Psoas muscle (tissue), 8 donors: ENCODE measurements at regions of chr15 and their contacts with region 1.

Region 1: DNA sequence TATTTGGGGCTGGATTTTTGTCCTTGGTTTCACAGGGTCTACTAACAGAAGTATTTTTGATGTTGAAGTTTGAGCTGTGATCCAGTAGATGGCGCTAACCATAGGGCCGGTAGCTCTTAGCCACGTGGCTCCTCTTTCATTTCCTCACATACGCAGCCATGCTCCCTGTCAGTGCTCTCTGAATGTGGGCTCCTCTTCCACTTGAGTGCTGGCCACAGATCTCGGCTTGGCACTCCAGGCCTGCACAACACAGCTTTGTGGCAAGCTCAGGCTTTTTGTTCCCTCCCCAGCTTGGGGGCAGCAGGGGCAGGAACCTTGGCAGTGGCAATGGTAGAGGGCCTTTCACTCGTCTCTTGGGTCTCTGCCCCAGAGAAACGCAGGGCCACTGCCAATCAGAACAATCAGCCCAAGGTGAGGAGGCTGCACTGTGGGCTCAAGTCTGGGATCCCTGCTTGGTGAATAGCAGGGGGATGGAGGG is 18.6 kb upstream of the DNAAF4 start:
- DNase-seq: no peak
- ATAC-seq: peak; percentile 64 to 86 (median 80)
- H3K4me3 ChIP-seq: no peak overlapping the region
- H3K27ac ChIP-seq: no peak overlapping the region
- H3K4me1 ChIP-seq: peaks cover 9% of the 10 kb centered on the region
- H3K27me3 ChIP-seq: no peaks in the 10 kb centered on the region
- CTCF ChIP-seq: peak; percentile 56

Region 2: DNA sequence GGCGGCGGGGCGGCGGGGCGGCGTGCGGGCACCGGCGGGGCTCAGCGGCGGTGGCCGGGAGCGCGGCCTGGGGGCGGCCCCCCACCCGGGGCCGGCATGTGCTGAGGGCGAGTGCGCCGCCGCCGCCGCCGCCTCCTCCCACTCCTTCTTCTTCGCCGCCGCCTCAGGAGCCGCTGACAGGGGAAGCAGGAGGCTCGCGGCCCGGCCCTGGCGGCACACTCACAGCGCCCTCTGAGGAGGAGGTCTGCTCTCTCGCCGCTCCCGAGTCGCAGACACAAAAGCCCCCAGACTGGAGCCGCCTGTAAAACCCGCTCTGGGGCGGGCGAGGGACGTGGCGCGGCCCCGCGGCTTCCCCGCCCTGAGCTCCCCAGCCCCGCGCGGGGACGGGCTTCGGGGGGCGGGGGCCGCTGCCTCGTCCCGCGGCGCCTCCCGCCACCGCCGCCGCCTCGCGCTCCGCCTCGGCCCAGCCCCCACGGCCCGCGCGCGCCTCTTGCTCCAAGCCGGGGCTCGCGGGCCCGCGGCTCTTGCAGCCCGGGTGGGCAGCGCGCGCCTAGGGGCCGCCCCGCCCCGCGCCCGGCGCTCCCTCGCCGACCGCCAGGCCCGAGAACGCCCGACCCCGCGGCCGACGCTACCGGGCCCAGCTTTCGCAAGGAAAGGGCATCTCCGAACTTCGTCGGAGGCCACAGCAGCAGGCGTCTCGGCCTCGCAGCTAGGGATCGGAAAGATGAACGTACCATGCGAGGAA is 61.6 kb after region 1 on chr15 and contains the start of gene PYGO1:
- intact Hi-C with region 1: loop called (anchors 5 kb)
- DNase-seq: peak; percentile 69 to 83
- ATAC-seq: peak; percentile 75 to 86 (median 82)
- H3K4me3 ChIP-seq: peak within 1 kb of the TSS; percentile 77
- H3K27ac ChIP-seq: peak within 1 kb of the TSS; percentile 96
- H3K4me1 ChIP-seq: peaks cover 2% of the 10 kb centered on the region
- H3K27me3 ChIP-seq: no peaks in the 10 kb centered on the region
- CTCF ChIP-seq: no peak
- total RNA-seq, gene PYGO1: 18.8 to 30.2 (median 28.5) TPM

Region 3: GRCh38 chr15:55637086-55637485 is 110.5 kb after region 1 on chr15:
- intact Hi-C with region 1: loop called (anchors 2 to 5 kb)
- DNase-seq: no peak
- ATAC-seq: peak in 3 of 4 donors; percentile 27 to 66 (median 44)
- H3K4me3 ChIP-seq: no peak overlapping the region
- H3K27ac ChIP-seq: peak overlapping the region; percentile 75
- H3K4me1 ChIP-seq: peaks cover 14% of the 10 kb centered on the region
- H3K27me3 ChIP-seq: no peaks in the 10 kb centered on the region
- CTCF ChIP-seq: no peak

Region 4: DNA sequence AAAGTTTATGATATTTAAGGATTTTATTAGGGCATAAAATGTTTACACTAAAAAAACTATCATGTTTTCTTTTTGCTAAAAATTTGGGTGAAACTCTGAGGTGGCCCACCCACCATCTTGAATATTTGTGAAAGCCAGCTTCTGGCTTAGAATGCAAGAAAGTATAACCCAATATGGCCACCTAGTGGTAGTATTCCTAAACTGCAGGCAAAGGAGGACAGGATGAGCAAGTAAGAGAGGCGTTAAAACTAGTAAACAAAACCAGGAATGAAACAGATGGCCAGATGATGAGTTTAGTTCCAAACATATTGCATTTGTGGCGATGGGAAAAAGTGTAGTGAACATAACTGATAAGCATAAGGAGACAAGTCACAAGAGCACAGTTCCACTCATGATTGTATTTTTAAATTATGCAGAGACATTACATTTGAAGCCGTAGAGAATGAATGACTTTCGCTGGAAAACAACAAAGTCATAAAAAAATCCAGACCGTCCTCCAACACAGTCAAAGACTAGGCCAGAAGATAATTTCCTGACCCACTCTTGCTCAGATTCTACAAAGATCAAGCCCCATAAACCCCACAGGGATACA is 319.6 kb after region 1 on chr15:
- intact Hi-C with region 1: loop called in 1 of 2 experiments (anchors 10 kb)
- DNase-seq: no peak
- ATAC-seq: peak; percentile 53 to 76 (median 70)
- H3K4me3 ChIP-seq: no peak overlapping the region
- H3K27ac ChIP-seq: no peak overlapping the region
- H3K4me1 ChIP-seq: no peaks in the 10 kb centered on the region
- H3K27me3 ChIP-seq: no peaks in the 10 kb centered on the region
- CTCF ChIP-seq: peak; percentile 88

Region 5: DNA sequence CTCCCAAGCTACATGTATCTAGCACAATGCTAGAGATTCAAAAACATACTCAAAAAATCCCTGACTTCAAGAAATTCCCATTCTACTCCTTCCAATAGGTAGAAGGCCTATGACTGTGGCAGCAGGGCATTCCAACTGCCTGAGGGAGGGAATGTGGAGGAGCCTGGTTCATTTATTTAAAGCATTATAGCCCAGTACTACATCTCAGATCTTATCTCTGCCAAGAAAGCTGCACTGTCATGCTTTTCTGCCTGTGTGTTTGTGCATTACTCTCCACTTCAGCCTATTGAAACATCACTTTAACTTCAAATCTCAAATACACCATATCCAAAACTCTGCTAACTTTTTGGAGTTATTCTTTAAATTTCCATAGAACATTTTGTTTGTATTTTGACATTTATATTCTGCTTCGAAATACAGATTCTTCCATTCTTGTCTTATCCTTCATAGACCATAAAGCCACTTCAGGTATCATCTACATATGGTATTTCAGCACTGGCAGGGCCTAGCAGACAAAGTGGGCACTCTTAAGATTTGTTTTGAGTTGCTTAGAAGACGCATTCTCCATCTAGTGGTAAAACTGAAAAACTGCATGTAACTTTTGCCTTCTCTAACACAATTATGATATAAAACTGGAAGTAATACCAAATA is 525.9 kb after region 1 on chr15:
- intact Hi-C with region 1: loop called in 1 of 2 experiments (anchors 10 kb)
- DNase-seq: no peak
- ATAC-seq: peak; percentile 48 to 77 (median 60)
- H3K4me3 ChIP-seq: no peak overlapping the region
- H3K27ac ChIP-seq: no peak overlapping the region
- H3K4me1 ChIP-seq: no peaks in the 10 kb centered on the region
- H3K27me3 ChIP-seq: no peaks in the 10 kb centered on the region
- CTCF ChIP-seq: peak; percentile 80